ENCODE measurements at regions of chr1 and their contacts with region 1.

Region 1: DNA sequence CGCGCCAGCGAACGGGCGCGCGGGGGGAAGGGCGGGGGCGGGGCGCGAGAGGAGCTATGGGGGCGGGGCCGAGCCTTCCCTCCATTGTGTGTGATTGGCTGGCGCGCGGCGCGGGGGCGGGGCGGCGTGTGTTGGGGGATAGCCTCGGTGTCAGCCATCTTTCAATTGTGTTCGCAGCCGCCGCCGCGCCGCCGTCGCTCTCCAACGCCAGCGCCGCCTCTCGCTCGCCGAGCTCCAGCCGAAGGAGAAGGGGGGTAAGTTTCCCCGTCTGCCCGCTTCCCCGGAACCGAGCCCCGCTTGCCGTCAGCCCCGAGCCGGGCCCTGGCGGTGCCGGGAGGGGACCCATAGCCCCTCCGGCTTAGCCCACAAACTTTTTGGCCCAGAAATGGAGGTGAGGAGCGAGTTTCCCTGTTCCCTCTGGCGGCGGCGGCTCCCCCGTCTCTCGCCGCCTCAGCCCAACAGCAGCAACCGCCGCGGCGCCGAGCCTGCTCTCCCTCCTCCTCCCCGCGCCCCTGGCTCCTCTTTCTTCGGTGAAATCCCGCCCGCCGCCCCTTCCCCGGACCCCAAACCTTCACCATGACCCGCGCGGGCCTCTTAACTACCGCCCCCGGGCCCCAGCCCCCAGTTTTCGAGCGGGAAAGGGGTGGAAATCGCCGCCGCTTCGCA is at the start of gene H3-3A:
- DNase-seq: peak; percentile 95 to 99 (median 98)
- ATAC-seq: peak; percentile 82 to 85 (median 83)
- H3K4me3 ChIP-seq: peak within 1 kb of the TSS; percentile 64 to 99
- H3K4me3 Mint-ChIP-seq: peak within 1 kb of the TSS; percentile 99 to 100 (median 100)
- H3K27ac ChIP-seq: peak within 1 kb of the TSS; percentile 95
- H3K27ac Mint-ChIP-seq: peak within 1 kb of the TSS; percentile 99 to 100
- H3K4me1 ChIP-seq: peaks cover 25 to 31% of the 10 kb centered on the region in 2 experiments
- H3K4me1 Mint-ChIP-seq: peaks cover 51 to 55% (median 51%) of the 10 kb centered on the region in 3 donors
- H3K27me3 ChIP-seq: no peaks in the 10 kb centered on the region
- H3K27me3 Mint-ChIP-seq: no peaks in the 10 kb centered on the region
- total RNA-seq, gene H3-3A: 340 to 391 (median 366) TPM

Region 2: DNA sequence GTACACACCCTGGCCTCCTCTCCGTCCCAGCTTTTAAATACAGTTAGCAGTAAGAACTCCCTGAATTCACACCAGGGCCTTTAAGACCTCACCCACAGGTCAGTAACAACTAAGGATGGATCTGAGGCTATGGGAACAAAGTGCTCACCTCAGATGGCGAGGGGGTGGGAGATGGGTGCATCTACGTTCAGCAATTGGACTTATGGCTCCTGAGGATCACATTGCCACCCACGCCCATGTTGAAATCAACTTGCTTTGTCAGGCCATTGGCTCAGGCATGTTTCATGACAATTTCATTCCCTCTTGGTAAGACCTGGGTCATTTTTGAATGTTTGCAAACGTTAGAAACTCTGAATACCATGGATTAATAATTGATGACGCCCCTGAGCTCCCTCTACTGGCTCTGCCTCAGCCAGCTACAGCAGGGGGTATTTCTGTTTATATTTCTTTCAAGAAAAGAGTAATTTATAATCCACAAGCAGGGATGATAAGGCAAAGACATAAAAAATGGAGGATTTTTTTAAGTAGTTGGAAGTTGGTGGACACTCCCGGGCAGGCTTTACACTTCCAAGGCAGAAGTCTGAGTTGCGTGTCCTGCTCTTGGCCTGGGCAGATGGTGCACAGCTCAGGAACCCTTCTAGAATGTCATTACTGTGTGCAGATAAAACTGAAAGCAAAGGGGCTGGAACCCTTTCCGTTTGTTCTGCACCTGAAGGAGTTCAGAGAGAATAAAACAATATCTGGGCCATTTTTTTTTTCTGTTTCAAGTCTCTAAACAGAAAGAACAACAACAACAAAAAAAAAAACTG is 621.2 kb before region 1 on chr1:
- CTCF ChIA-PET with region 1: interaction called, 3 to 10 read pairs
- POLR2A ChIA-PET with region 1: interaction called in 1 of 2 experiments, 6 read pairs
- DNase-seq: no peak
- ATAC-seq: no peak
- H3K4me3 ChIP-seq: peak overlapping the region in 1 of 2 donors; percentile 2
- H3K4me3 Mint-ChIP-seq: peak overlapping the region; percentile 4 to 62 (median 17)
- H3K27ac ChIP-seq: peak overlapping the region; percentile 56
- H3K27ac Mint-ChIP-seq: peak overlapping the region; percentile 87 to 93
- H3K4me1 ChIP-seq: peaks cover 20 to 53% of the 10 kb centered on the region in 2 experiments
- H3K4me1 Mint-ChIP-seq: peaks cover 52 to 58% (median 58%) of the 10 kb centered on the region in 3 donors
- H3K27me3 ChIP-seq: no peaks in the 10 kb centered on the region
- H3K27me3 Mint-ChIP-seq: no peaks in the 10 kb centered on the region

Region 3: GRCh38 chr1:225933072-225933471 is 129.6 kb before region 1 on chr1:
- CTCF ChIA-PET with region 1: no interaction called
- POLR2A ChIA-PET with region 1: no interaction called
- DNase-seq: no peak
- ATAC-seq: no peak
- H3K4me3 ChIP-seq: no peak overlapping the region
- H3K4me3 Mint-ChIP-seq: no peak overlapping the region
- H3K27ac ChIP-seq: no peak overlapping the region
- H3K27ac Mint-ChIP-seq: no peak overlapping the region
- H3K4me1 ChIP-seq: peaks cover 10 to 13% of the 10 kb centered on the region in 2 experiments
- H3K4me1 Mint-ChIP-seq: peaks cover 13 to 15% (median 14%) of the 10 kb centered on the region in 3 donors
- H3K27me3 ChIP-seq: no peaks in the 10 kb centered on the region
- H3K27me3 Mint-ChIP-seq: peaks cover 0 to 2% of the 10 kb centered on the region in 2 donors

Region 4: DNA sequence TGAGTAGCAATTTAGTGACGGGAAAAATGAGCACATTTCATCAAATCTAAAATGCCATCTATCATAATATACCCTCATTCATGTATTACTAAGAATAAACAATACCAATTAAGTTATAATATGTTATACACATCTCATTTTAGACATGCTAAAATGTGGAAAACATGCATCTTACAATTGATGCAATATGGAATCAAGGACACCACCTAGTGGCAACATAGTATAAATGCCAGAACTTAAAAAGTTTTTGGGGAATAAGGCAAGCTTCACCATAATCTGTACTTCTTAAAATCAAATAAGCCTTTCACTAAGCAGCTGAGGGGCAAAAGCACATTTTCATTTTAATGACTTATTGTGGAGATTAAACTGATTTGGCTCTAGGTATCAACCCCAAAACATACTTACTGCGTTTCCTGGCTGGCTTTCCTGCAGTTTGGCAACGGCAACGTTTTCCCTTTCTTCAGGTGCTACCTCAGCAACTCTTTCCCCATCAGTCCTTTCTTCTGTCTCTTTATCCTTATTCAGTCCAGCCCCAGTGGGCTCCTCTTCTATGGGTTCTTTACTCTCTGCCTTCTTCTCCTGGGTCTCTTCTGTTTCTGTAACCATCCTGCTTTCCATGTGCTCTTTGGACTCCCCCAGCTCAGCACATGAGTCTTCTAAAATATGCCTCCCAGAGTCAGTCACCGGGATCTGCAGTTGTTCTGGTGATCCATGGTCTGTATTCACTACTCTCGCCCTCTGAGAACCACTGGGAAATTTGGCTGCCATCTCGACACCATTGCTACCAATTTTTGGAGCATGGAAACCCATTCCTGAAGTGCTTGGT is 75.0 kb before region 1 on chr1:
- CTCF ChIA-PET with region 1: interaction called, 3 to 12 read pairs
- POLR2A ChIA-PET with region 1: interaction called in 1 of 2 experiments, 3 read pairs
- DNase-seq: peak in 1 of 35 experiments; percentile 66
- ATAC-seq: peak in 2 of 4 experiments; percentile 48 to 61
- H3K4me3 ChIP-seq: no peak overlapping the region
- H3K4me3 Mint-ChIP-seq: no peak overlapping the region
- H3K27ac ChIP-seq: no peak overlapping the region
- H3K27ac Mint-ChIP-seq: peak overlapping the region in 1 of 2 donors; percentile 1
- H3K4me1 ChIP-seq: peaks cover 0 to 6% of the 10 kb centered on the region in 2 experiments
- H3K4me1 Mint-ChIP-seq: peaks cover 28 to 37% (median 34%) of the 10 kb centered on the region in 3 donors
- H3K27me3 ChIP-seq: no peaks in the 10 kb centered on the region
- H3K27me3 Mint-ChIP-seq: no peaks in the 10 kb centered on the region

Region 5: GRCh38 chr1:226044514-226045101 is 18.1 kb before region 1 on chr1:
- CTCF ChIA-PET with region 1: no interaction called
- POLR2A ChIA-PET with region 1: no interaction called
- DNase-seq: no peak
- ATAC-seq: no peak
- H3K4me3 ChIP-seq: no peak overlapping the region
- H3K4me3 Mint-ChIP-seq: no peak overlapping the region
- H3K27ac ChIP-seq: no peak overlapping the region
- H3K27ac Mint-ChIP-seq: no peak overlapping the region
- H3K4me1 ChIP-seq: no peaks in the 10 kb centered on the region
- H3K4me1 Mint-ChIP-seq: peaks cover 0 to 2% (median 0%) of the 10 kb centered on the region in 3 donors
- H3K27me3 ChIP-seq: no peaks in the 10 kb centered on the region
- H3K27me3 Mint-ChIP-seq: peaks cover 0 to 4% of the 10 kb centered on the region in 2 donors

Region 6: DNA sequence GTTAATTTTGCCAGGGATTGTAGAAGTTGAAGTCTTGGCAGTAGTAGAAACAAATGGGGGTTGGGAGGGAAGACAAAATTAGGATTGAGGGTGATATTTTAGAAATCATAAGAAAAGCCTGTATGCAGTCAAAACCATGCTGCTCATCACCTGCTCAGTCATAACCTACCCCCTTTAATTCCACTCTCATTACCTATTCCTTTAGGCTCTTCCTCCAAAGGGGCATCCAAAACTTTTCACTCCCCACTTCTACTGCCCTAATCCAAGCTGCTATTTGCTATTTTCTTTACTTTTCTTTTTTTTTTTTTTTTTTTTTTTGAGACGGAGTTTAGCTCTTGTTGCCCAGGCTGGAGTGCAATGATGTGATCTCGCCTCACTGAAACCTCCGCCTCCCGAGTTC is 11.4 kb after region 1 on chr1:
- CTCF ChIA-PET with region 1: interaction called, 3 to 16 read pairs
- POLR2A ChIA-PET with region 1: interaction called, 3 to 9 read pairs
- DNase-seq: no peak
- ATAC-seq: peak in 2 of 4 experiments; percentile 10 to 25
- H3K4me3 ChIP-seq: no peak overlapping the region
- H3K4me3 Mint-ChIP-seq: peak overlapping the region in 1 of 3 donors; percentile 5
- H3K27ac ChIP-seq: no peak overlapping the region
- H3K27ac Mint-ChIP-seq: no peak overlapping the region
- H3K4me1 ChIP-seq: peaks cover 3 to 7% of the 10 kb centered on the region in 2 experiments
- H3K4me1 Mint-ChIP-seq: peaks cover 26 to 30% (median 29%) of the 10 kb centered on the region in 3 donors
- H3K27me3 ChIP-seq: peaks cover 0 to 3% of the 10 kb centered on the region in 2 experiments
- H3K27me3 Mint-ChIP-seq: no peaks in the 10 kb centered on the region

Region 7: DNA sequence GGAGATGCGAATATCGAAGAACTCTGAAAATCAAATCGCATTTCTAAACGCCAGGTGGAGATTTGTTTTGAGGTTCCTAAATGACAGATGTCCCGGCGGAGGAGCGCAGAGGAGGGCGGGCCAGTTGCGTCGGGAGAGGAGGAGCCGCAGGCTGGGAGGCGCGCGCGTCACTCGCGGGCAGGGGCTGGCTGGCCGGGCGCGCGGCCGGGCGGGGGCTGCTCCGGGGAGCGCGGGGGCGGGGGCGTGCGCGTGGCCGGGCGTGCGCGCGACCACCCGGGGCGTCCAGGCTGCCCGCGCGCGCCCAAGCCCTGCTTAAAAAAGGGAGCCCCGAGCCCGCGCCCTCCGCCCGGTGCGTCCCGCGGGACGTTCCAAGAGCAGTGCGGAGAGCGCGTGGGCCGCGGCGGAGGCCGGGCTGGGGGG is 47.1 kb after region 1 on chr1:
- CTCF ChIA-PET with region 1: interaction called in 1 of 2 experiments, 11 read pairs
- POLR2A ChIA-PET with region 1: no interaction called
- DNase-seq: peak; percentile 30 to 85 (median 58)
- ATAC-seq: peak; percentile 80 to 86 (median 86)
- H3K4me3 ChIP-seq: peak overlapping the region; percentile 51 to 62
- H3K4me3 Mint-ChIP-seq: peak overlapping the region; percentile 81 to 93 (median 93)
- H3K27ac ChIP-seq: peak overlapping the region; percentile 60
- H3K27ac Mint-ChIP-seq: peak overlapping the region; percentile 77 to 88
- H3K4me1 ChIP-seq: peaks cover 2 to 22% of the 10 kb centered on the region in 2 experiments
- H3K4me1 Mint-ChIP-seq: peaks cover 12 to 28% (median 13%) of the 10 kb centered on the region in 3 donors
- H3K27me3 ChIP-seq: no peaks in the 10 kb centered on the region
- H3K27me3 Mint-ChIP-seq: no peaks in the 10 kb centered on the region

Region 8: DNA sequence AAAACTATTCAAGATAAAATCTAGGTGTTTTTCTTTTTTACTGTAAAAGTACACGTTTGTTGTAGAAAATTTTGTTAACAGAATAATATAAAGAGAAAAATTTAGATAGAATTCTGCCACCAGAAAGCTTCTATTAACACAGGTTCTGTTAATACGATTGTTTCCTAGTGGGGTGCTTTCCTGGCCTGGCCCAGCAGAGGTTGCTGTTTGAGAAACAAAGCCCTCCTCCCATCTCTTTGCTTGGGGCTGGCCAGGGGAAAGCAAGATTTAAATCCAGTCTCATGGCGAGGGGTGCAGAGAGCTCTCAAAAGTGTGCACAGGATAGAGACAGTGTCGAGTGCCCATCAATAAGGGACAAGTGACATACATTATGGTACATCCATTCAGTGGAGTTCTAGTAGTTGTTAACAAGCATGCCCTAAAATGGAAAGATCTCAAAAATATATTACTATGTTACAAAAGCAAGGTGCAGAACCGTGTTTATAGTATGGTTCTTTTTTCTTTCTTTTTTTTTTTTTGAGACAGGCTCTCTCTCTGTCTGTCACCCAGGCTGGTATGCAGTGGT is 138.4 kb after region 1 on chr1:
- CTCF ChIA-PET with region 1: interaction called in 1 of 2 experiments, 10 read pairs
- POLR2A ChIA-PET with region 1: no interaction called
- DNase-seq: peak in 1 of 35 experiments; percentile 9
- ATAC-seq: no peak
- H3K4me3 ChIP-seq: no peak overlapping the region
- H3K4me3 Mint-ChIP-seq: no peak overlapping the region
- H3K27ac ChIP-seq: no peak overlapping the region
- H3K27ac Mint-ChIP-seq: no peak overlapping the region
- H3K4me1 ChIP-seq: peaks cover 0 to 3% of the 10 kb centered on the region in 2 experiments
- H3K4me1 Mint-ChIP-seq: peaks cover 0 to 3% (median 2%) of the 10 kb centered on the region in 3 donors
- H3K27me3 ChIP-seq: peaks cover 0 to 15% of the 10 kb centered on the region in 2 experiments
- H3K27me3 Mint-ChIP-seq: peaks cover 4 to 15% of the 10 kb centered on the region in 2 donors

Measured in T-cell (primary cell).